H1 (cell line): ENCODE measurements at regions of chr6 and their contacts with region 1.

Region 1: DNA sequence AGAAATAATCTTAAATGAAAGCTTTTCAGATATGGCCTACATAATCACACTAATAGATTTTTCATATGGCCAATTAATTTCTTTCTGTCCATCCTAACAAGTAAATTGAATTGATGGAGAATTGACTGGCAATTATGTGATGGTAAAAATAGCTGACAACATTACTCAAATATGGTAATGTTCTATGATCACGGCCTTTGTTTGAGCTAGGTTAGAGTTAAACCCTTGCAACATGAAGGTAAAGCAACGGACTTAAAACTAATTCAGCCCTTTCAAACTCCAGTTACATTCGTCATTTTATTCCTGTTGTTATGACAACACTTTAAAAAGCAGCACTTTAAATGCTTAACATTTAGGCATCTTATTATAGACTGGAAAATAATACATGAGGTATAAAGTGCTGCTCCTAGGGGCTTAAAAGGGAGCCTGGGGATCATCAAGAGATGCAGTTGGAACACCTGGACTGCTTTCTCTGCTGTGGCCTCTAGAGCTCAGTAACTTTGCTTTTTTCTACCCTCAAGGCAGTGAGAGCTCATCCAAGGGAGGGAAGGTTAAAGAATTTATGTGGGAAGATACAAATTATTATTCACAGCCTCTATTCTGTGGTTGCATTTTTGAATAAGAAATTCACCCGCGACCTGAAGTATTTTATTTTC is 46.9 kb downstream of the RIPOR2 start:
- DNase-seq: no peak
- H3K4me3 ChIP-seq: no peak overlapping the region
- H3K27ac ChIP-seq: no peak overlapping the region
- H3K4me1 ChIP-seq: peaks cover 0 to 3% (median 1%) of the 10 kb centered on the region in 4 experiments; a peak in 2 of 7 replicates
- H3K27me3 ChIP-seq: no peaks in the 10 kb centered on the region
- CTCF ChIP-seq: peak in 1 of 3 experiments; percentile 1; a peak in 1 of 4 replicates
- EP300 ChIP-seq: no peak
- POLR2A ChIP-seq: no peak
- RAD21 ChIP-seq: peak in 1 of 2 experiments; percentile 19; a peak in 2 of 4 replicates

Region 2: GRCh38 chr6:24899997-24900325 is 11.1 kb after region 1 on chr6:
- CTCF ChIA-PET with region 1: interaction called, 24 read pairs
- POLR2A ChIA-PET with region 1: no interaction called
- DNase-seq: no peak
- H3K4me3 ChIP-seq: no peak overlapping the region
- H3K27ac ChIP-seq: no peak overlapping the region
- H3K4me1 ChIP-seq: peaks cover 4 to 6% (median 5%) of the 10 kb centered on the region in 4 experiments; a peak in 4 of 7 replicates
- H3K27me3 ChIP-seq: no peaks in the 10 kb centered on the region
- CTCF ChIP-seq: no peak
- EP300 ChIP-seq: no peak
- POLR2A ChIP-seq: no peak
- RAD21 ChIP-seq: no peak